Activated T-helper 1 cell treated with anti-CD3 and anti-CD28 coated beads, Interleukin-12 subunit alpha, Interleukin-12 subunit beta, Interleukin-2, Interleukin-4 antibody, amounts not matched to agents 30 ng/mL and 10 ng/mL and 1 ng/mL, durations not matched to agents 14 hours and 24 hours and 36 hours (primary cell): ENCODE measurements at regions of chr9 and their contacts with region 1.

Region 1: DNA sequence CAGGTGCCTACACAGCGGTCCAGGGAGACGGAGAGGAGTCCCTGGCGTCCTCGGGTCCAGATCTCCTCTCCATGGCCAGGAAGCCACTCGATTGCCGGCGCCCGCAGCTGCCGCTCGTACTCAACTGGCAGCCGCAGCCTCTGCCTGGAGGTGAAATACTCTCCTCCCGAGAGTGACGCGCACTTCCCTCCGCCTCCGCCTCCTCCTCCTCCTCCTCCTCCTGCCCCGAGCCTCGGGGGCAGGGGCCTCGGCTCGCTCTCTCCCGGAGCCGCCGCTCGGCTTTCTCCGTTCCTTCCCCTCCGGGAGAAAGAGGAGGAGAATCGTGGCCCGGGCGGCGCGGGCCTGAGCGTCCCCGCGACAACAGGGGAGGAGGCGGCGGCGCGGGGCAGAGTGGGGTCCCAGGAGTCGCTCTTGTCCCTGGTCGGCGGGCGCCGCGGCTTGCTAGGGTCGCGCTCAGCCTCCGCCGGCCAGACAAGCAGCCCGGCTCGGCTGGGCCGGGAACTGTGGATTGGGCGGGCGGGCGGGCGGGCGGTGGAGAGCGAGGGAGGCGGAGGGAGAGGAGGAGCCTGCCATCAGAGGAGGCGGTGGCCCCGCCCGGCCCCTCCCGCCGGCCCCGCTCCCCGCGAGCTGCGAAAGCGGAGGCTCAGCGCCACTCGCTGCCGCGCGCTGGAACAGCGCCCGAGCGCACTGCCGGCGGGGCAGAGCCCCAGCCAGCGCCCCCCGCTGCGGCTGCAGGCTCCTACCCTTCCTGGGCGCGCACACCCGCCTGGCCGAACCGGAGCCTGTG is at the start of gene CEMIP2:
- DNase-seq: peak; percentile 84
- H3K4me3 Mint-ChIP-seq: peak within 1 kb of the TSS; percentile 96
- H3K27ac Mint-ChIP-seq: peak within 1 kb of the TSS; percentile 92
- H3K4me1 Mint-ChIP-seq: peaks cover 48% of the 10 kb centered on the region
- H3K27me3 Mint-ChIP-seq: no peaks in the 10 kb centered on the region
- total RNA-seq, gene CEMIP2: 70.0 and 79.1 TPM in 2 replicates

Region 2: GRCh38 chr9:71446473-71447411 is 321.8 kb before region 1 on chr9:
- intact Hi-C with region 1: loop called (anchors 10 kb)
- DNase-seq: peak; percentile 17
- H3K4me3 Mint-ChIP-seq: peak overlapping the region; percentile 17
- H3K27ac Mint-ChIP-seq: no peak overlapping the region
- H3K4me1 Mint-ChIP-seq: no peaks in the 10 kb centered on the region
- H3K27me3 Mint-ChIP-seq: peaks cover 32% of the 10 kb centered on the region

Region 3: DNA sequence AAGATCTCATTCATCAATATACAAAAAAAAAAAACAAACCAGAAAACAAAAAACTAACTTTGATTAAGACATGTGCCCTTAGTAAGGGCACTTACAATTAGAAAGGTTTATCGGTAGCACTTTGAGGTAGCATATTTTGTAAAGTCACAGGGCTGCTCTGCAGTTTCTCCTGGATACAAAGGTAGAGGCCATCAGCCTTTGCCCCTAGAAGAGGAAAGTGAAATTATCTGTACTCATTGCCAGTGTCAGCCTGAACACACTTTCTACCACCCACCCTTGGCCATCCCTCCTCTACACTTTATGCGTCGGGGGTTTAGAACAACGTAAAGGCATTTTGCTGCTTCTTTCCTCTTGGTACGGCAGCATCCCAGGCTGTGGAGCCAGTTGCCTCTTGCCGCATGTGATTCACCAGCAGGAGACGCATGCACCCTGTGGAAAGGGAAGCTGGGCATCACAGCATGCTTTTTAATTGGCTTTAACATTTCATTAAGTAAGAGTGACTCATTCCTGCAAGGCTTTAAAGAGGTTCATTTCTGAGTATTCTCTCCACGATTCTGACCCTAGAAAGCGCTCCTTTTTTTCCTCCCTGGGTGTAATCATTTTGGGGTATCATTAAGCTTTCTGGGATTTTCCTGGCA is 84.9 kb before region 1 on chr9:
- intact Hi-C with region 1: loop called (anchors 1 kb)
- DNase-seq: no peak
- H3K4me3 Mint-ChIP-seq: peak overlapping the region; percentile 72
- H3K27ac Mint-ChIP-seq: peak overlapping the region; percentile 68
- H3K4me1 Mint-ChIP-seq: peaks cover 60% of the 10 kb centered on the region
- H3K27me3 Mint-ChIP-seq: no peaks in the 10 kb centered on the region

Region 4: DNA sequence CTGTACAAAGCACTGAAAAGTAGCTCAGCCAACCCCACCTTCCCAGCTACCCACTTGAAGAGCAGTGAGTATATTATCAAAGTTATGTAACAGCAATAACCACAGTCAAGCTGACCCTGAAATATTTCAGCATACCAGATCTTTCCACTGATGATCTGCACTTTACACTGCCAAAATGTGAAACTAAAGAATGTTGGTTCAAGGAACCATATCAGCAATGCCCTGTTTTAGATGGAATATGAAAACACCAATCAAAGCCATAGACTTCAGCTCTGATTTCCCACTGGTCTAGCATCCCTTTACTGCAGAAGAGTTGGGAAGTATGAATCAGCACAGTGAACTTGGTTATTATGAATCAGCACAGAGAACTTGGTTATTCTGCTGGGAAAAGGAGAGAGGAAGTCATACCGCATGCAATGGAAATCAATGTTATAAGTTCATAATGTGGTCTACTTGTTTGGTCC is 20.3 kb before region 1 on chr9:
- intact Hi-C with region 1: loop called (anchors 1 kb)
- DNase-seq: no peak
- H3K4me3 Mint-ChIP-seq: no peak overlapping the region
- H3K27ac Mint-ChIP-seq: no peak overlapping the region
- H3K4me1 Mint-ChIP-seq: peaks cover 33% of the 10 kb centered on the region
- H3K27me3 Mint-ChIP-seq: no peaks in the 10 kb centered on the region

Region 5: GRCh38 chr9:71858812-71859211 is 90.2 kb after region 1 on chr9:
- intact Hi-C with region 1: loop called (anchors 2 kb)
- DNase-seq: peak; percentile 3
- H3K4me3 Mint-ChIP-seq: peak overlapping the region; percentile 0
- H3K27ac Mint-ChIP-seq: peak overlapping the region; percentile 51
- H3K4me1 Mint-ChIP-seq: peaks cover 25% of the 10 kb centered on the region
- H3K27me3 Mint-ChIP-seq: no peaks in the 10 kb centered on the region

Region 6: DNA sequence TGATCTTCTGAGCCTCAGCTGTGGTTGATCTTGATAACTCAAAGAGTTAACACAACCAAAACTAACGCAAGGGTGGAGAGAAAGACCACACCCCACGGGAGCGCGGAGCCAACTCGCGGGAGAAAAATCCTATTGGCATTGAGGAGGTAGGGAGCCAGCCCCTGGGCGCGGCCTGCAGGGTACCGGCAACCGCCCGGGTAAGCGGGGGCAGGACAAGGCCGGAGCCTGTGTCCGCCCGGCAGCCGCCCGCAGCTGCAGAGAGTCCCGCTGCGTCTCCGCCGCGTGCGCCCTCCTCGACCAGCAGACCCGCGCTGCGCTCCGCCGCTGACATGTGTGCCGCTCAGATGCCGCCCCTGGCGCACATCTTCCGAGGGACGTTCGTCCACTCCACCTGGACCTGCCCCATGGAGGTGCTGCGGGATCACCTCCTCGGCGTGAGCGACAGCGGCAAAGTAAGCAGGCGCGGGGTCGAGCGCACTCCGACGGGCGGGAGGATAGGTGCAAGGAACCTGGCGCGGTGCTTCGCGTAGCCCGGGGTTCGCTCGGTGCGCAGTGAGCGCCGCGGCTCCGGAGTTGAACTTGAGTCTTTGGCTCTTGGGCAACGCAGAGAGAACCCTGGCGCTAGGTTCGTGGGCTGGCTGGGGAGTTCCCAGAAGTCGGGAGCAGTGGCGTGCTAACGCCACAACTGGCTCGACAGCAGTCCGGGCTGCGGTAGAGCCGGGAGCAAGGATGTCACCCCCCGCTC is 380.8 kb after region 1 on chr9 and contains the start of gene GDA:
- intact Hi-C with region 1: no loop called
- DNase-seq: no peak
- H3K4me3 Mint-ChIP-seq: no peak within 1 kb of the TSS
- H3K27ac Mint-ChIP-seq: no peak within 1 kb of the TSS
- H3K4me1 Mint-ChIP-seq: no peaks in the 10 kb centered on the region
- H3K27me3 Mint-ChIP-seq: peaks cover 23% of the 10 kb centered on the region
- total RNA-seq, gene GDA: not detected in 2 replicates